CD4-positive, alpha-beta memory T cell (primary cell): ENCODE measurements at regions of chr9 and their contacts with region 1.

Region 1: DNA sequence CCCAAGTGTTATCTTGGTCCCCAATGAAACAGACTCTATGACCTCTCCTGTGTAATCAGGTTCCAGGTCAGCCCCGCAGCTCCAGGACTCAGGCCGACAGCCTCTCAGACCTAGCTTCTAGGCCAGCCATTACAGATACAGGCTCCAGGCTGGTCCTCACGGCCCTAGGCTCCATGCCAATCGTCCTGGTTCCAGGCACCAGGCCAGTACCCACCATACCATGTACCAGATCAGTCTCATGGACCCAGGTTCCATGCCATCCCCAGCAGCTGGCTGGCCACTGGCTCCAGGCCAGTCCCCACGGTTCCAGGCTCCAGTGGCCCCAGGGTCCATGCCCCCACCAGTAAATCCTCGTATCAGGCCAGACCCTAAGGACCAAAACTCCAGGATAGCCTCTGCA is 1326.6 kb upstream of the C9orf72 start:
- DNase-seq: no peak
- H3K4me3 ChIP-seq: no peak overlapping the region
- H3K4me3 Mint-ChIP-seq: no peak overlapping the region
- H3K27ac ChIP-seq: no peak overlapping the region
- H3K27ac Mint-ChIP-seq: no peak overlapping the region
- H3K4me1 ChIP-seq: no peaks in the 10 kb centered on the region
- H3K4me1 Mint-ChIP-seq: no peaks in the 10 kb centered on the region
- H3K27me3 ChIP-seq: no peaks in the 10 kb centered on the region
- H3K27me3 Mint-ChIP-seq: no peaks in the 10 kb centered on the region

Region 2: GRCh38 chr9:28951944-28952343 is 52.0 kb after region 1 on chr9:
- CTCF ChIA-PET with region 1: no interaction called
- POLR2A ChIA-PET with region 1: no interaction called
- intact Hi-C with region 1: loop called (anchors 10 kb)
- DNase-seq: no peak
- H3K4me3 ChIP-seq: no peak overlapping the region
- H3K4me3 Mint-ChIP-seq: no peak overlapping the region
- H3K27ac ChIP-seq: no peak overlapping the region
- H3K27ac Mint-ChIP-seq: no peak overlapping the region
- H3K4me1 ChIP-seq: no peaks in the 10 kb centered on the region
- H3K4me1 Mint-ChIP-seq: no peaks in the 10 kb centered on the region
- H3K27me3 ChIP-seq: no peaks in the 10 kb centered on the region
- H3K27me3 Mint-ChIP-seq: no peaks in the 10 kb centered on the region